Psoas muscle (tissue), 8 donors: ENCODE measurements at regions of chr5 and their contacts with region 1.

Region 1: DNA sequence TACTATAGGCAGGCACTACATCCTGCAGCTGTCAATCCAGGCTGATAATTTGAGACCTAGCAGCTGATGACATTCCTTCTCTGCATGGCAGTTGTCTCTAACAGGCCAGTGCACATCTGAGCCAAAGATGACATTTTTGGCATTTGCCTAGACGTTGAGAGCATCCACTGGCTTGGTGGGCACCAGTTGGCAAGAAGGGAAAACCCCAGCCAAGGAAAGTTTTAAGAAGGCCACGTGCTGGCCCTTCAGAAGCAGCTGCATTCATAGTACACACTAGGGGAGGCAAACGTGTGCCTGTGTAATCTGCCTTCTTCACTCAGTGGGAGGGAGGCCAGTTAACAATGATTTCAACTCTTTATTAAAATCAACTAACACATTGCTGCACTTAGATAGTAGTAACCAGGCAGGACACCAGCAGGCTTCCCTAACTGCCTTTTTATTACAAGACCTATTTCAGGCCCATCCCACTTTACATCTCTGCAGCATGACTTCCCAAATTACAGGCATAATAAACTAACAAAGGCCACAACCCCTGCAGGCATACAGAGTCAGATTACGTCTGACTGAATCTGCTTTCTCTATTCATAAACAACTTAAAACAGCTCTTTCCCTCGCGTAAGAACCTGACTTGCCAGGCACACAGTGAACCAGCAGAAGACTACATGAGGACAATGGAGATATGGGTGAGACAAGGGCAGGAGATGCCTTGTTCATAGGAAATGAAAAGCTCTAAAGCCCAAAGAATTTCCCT is 576.3 kb downstream of the PDE4D start:
- DNase-seq: no peak
- ATAC-seq: peak; percentile 59 to 87 (median 72)
- H3K4me3 ChIP-seq: no peak overlapping the region
- H3K27ac ChIP-seq: peak overlapping the region; percentile 81
- H3K4me1 ChIP-seq: peaks cover 87% of the 10 kb centered on the region
- H3K27me3 ChIP-seq: no peaks in the 10 kb centered on the region
- CTCF ChIP-seq: no peak

Region 2: DNA sequence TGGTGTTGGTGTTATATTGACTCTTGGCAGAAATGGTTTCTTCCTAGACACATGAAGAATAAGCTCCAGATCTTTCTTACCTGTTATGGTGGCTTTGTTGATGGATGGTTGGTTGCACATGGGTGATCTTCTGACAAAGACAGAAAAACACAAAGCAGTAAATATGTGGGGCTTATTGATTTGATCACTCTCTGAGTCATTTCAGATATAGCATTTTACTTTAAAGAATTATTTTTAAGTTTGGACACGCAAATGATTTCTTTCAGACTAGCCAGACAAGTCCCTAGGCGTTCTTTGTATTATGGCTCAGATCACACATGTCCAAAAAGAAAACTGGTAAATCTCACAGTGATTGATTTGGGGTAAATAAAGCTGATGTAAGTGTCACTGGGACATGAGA is 136.7 kb before region 1 on chr5:
- intact Hi-C with region 1: no loop called
- DNase-seq: no peak
- ATAC-seq: no peak
- H3K4me3 ChIP-seq: no peak overlapping the region
- H3K27ac ChIP-seq: no peak overlapping the region
- H3K4me1 ChIP-seq: peaks cover 16% of the 10 kb centered on the region
- H3K27me3 ChIP-seq: no peaks in the 10 kb centered on the region
- CTCF ChIP-seq: no peak

Region 3: GRCh38 chr5:59275510-59276324 is 41.5 kb before region 1 on chr5:
- intact Hi-C with region 1: loop called in 1 of 2 experiments (anchors 5 kb)
- DNase-seq: no peak
- ATAC-seq: peak; percentile 41 to 67 (median 58)
- H3K4me3 ChIP-seq: peak overlapping the region; percentile 60
- H3K27ac ChIP-seq: peak overlapping the region; percentile 77
- H3K4me1 ChIP-seq: peaks cover 78% of the 10 kb centered on the region
- H3K27me3 ChIP-seq: no peaks in the 10 kb centered on the region
- CTCF ChIP-seq: no peak

Region 4: DNA sequence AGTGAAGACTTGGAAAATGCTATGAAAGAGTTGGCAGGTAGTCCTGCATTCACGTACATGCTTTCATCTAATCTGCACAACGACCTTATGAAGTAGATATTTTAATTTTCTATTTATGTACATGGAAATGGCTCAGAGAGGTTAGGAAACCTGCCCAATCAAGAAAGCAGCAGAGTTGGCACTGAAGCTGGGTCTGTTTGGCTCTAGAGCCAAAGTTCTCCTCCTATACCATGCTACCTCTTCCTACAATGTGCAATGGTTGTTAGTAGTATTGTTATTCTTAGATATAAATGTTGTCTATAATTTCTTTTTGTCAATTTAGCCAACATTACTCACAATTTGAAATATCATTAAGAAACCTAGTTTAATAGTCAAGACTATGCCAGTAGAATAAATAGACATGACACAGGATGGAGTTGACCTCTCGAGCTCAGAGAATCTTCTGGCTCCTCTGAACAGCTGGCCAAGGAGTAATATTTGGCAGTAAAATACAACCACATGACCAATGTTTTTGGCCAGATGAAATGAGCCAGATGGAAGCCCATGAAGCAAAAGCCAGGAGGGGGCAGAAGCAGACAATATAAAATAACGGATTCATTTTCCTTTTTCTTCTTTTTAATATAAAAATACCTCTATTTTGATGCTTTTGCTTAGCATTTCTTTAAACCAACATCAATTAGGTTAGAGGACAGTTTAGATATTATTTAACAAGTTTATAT is 34.0 kb after region 1 on chr5:
- intact Hi-C with region 1: loop called in 1 of 2 experiments (anchors 5 kb)
- DNase-seq: peak in 1 of 2 donors; percentile 43
- ATAC-seq: peak; percentile 85 to 90 (median 86)
- H3K4me3 ChIP-seq: peak overlapping the region; percentile 74
- H3K27ac ChIP-seq: peak overlapping the region; percentile 95
- H3K4me1 ChIP-seq: peaks cover 64% of the 10 kb centered on the region
- H3K27me3 ChIP-seq: no peaks in the 10 kb centered on the region
- CTCF ChIP-seq: peak; percentile 43

Region 5: GRCh38 chr5:59540366-59540765 is 223.2 kb after region 1 on chr5:
- intact Hi-C with region 1: no loop called
- DNase-seq: no peak
- ATAC-seq: no peak
- H3K4me3 ChIP-seq: no peak overlapping the region
- H3K27ac ChIP-seq: peak overlapping the region; percentile 31
- H3K4me1 ChIP-seq: peaks cover 51% of the 10 kb centered on the region
- H3K27me3 ChIP-seq: no peaks in the 10 kb centered on the region
- CTCF ChIP-seq: no peak